GM10248 (cell line): ENCODE measurements at regions of chr11 and their contacts with region 1.

Region 1: DNA sequence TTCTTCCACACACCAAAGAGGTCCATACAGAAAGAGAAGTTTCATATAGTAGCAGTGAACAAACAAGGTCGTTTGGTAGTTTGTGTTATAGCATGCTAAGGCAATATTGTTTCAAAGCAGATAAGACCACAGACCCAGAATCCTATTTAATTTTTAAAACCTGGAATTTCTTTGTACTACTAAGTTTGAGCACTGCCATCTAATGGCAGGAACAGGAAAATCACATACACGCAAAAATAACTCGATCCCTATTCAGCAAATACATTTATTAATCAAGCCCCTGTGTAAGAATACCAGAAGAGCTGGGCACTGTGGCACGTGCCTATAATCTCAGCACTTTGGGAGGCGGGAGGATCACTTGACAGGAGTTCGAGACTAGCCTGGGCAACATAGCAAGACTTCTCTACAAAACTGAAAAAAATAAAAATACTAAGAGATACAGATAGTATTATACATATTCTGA is 2.9 kb upstream of the BTBD10 start:
- DNase-seq: peak; percentile 35
- CTCF ChIP-seq: peak; percentile 48

Region 2: GRCh38 chr11:12950681-12951080 is 515.3 kb before region 1 on chr11:
- CTCF ChIA-PET with region 1: no interaction called
- POLR2A ChIA-PET with region 1: no interaction called
- DNase-seq: no peak
- CTCF ChIP-seq: no peak

Region 3: DNA sequence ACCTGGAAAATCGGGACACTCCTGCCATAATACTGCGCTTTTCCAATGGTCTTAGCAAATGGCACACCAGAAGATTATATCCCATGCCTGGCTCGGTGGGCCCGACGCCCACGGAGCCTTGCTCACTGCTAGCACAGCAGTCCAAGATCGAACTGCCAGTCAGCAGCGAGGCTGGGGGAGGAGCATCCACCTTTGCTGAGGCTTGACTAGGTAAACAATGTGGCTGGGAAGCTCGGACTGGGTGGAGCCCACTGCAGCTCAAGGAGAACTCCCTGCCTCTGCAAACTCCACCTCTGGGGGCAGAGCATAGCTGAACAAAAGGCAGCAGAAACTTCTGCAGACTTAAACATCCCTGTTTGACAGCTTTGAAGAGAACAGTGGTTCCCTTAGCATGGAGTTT is 14.3 kb after region 1 on chr11:
- CTCF ChIA-PET with region 1: interaction called, 10 read pairs
- POLR2A ChIA-PET with region 1: no interaction called
- DNase-seq: no peak
- CTCF ChIP-seq: no peak

Region 4: GRCh38 chr11:13494051-13494450 is 28.1 kb after region 1 on chr11:
- CTCF ChIA-PET with region 1: no interaction called
- POLR2A ChIA-PET with region 1: no interaction called
- DNase-seq: no peak
- CTCF ChIP-seq: no peak